ENCODE measurements at regions of chr1 and their contacts with region 1.

Region 1: DNA sequence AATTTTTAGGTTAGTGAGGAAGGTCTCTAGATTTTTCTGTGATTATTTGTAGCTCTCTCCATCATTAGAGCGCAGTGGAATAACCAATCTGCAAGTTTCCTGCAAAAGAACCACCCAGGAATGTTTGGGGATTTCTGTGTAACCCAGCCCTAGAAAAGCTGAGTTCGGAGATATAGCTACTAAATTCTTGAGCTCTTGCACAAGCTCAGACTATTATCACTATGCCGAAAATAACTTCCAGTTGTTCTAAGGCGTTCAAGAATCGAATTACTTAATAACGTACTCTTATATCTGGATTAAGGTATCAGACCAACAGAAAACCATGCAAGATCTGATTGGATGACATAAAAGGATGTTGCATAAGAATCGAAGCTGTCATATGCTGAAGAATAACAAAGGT is 7.6 kb upstream of the LAMC2 start:
- DNase-seq: no peak
- ATAC-seq: no peak
- H3K4me3 ChIP-seq: no peak overlapping the region
- H3K27ac ChIP-seq: no peak overlapping the region
- H3K4me1 ChIP-seq: peaks cover 10% of the 10 kb centered on the region
- H3K27me3 ChIP-seq: no peaks in the 10 kb centered on the region
- CTCF ChIP-seq: no peak
- POLR2A ChIP-seq: no peak
- RAD21 ChIP-seq: no peak

Region 2: DNA sequence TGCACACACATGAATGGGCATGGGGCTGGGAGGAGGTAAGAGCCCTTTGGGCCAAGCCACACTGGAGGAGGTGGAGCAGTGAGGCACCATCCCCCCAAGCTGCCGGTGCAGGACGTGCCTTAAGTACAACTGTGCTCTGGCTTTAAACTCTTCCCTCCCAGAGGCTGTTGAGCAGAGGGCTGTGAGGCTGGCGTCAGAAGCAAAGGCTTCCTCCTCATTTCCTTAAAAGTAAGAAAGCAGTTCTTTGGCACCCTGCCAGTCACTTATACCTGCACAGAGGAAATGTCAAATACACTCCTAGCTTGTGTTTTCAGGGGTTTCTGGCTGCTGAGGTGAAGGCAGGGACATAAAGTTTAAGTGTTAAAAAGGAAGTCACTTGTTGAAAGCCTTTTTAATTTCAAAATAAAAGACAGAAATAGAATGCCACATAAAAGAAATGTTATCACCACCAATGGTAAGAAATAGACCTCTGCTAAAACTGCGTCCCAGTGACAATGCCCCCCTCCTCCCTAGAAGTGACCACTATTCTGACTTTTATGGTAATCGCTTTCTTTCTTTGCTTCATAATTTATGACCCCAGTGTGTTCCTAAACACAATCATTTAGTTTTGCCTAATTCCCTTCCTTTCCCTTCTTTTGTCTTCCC is 40.6 kb after region 1 on chr1:
- CTCF ChIA-PET with region 1: no interaction called
- POLR2A ChIA-PET with region 1: no interaction called
- dilution Hi-C with region 1: no loop called
- in situ Hi-C with region 1: no loop called
- intact Hi-C with region 1: loop called (anchors 5 kb)
- DNase-seq: no peak
- ATAC-seq: no peak
- H3K4me3 ChIP-seq: no peak overlapping the region
- H3K27ac ChIP-seq: no peak overlapping the region
- H3K4me1 ChIP-seq: peaks cover 6% of the 10 kb centered on the region
- H3K27me3 ChIP-seq: peaks cover 6% of the 10 kb centered on the region; the same call in 1 of the 2 replicates
- CTCF ChIP-seq: no peak
- POLR2A ChIP-seq: no peak
- RAD21 ChIP-seq: no peak

Measured in IMR-90 (cell line).